Activated CD8-positive, alpha-beta memory T cell treated with anti-CD3 and anti-CD28 coated beads, Interleukin-2, amount 10 ng/mL, durations not matched to agents 7 days and 5 days (primary cell): ENCODE measurements at regions of chr13 and their contacts with region 1.

Region 1: DNA sequence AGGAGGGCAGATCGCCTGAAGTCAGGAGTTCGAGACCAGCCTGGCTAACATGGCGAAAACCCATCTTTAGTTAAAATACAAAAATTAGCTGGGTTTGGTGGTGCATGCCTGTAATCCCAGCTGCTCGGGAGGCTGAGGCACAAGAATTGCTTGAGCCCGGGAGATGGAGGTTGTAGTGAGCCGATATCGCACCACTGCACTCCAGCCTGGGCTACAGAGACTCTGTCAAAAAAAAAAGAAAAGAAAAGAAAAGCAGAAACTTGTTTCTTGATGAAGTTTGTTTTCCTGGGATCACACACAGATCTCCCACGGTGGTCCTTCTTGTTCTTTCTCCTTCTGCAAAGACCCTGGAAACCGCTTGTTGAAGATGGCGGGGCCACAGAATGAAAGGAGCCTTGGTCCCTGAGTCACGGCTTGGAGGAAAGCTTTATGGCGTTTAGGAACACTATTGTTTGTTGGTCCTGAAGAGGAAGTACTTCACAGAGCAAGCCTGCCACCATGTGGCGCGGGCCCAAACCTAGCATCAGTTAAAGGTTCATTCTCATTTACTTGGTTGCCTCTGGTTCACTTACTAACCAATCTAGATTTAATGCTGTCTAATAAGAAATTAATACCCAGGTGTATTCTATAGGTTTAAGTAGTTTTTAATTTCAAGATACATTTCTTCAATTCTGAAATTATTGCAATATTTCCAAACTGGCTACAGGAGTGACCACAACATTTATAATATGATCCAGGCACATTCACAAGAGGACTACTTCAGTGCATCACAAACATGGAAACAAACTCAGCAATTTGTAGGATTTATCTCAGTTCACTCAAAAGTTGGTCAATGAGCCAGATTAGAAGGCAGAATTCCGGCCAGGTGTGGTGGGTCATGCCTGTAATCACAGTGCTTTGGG is 21.3 kb upstream of the ARL11 start:
- DNase-seq: peak; percentile 90
- ATAC-seq: peak; percentile 100
- H3K4me3 Mint-ChIP-seq: peak overlapping the region; percentile 72
- H3K27ac Mint-ChIP-seq: peak overlapping the region; percentile 77
- H3K4me1 Mint-ChIP-seq: peaks cover 4% of the 10 kb centered on the region
- H3K27me3 Mint-ChIP-seq: no peaks in the 10 kb centered on the region

Region 2: DNA sequence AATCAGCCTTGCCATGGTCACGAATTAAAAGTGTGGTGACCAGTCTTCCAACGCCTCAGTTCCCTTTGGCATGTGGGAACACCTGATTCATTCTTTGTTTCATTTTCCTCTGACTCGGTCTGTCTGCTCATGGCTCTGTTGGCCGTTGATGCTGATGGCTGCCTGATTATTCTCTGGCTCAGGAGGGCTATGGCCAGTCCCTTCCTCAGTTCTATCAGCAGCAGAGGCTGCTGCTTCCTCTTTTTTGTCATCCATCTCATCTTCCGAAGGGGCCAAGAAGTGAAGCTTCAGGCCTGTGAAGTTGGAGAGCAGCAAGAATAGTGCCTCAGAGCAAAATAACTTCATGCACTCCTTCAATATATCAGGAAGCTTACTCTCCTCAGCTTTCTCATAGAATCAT is 396.3 kb before region 1 on chr13:
- CTCF ChIA-PET with region 1: no interaction called
- DNase-seq: no peak
- ATAC-seq: no peak
- H3K4me3 Mint-ChIP-seq: no peak overlapping the region
- H3K27ac Mint-ChIP-seq: no peak overlapping the region
- H3K4me1 Mint-ChIP-seq: peaks cover 13% of the 10 kb centered on the region
- H3K27me3 Mint-ChIP-seq: no peaks in the 10 kb centered on the region

Region 3: GRCh38 chr13:49278211-49278610 is 328.8 kb before region 1 on chr13:
- CTCF ChIA-PET with region 1: interaction called, 13 read pairs
- DNase-seq: no peak
- ATAC-seq: no peak
- H3K4me3 Mint-ChIP-seq: no peak overlapping the region
- H3K27ac Mint-ChIP-seq: no peak overlapping the region
- H3K4me1 Mint-ChIP-seq: no peaks in the 10 kb centered on the region
- H3K27me3 Mint-ChIP-seq: no peaks in the 10 kb centered on the region

Region 4: GRCh38 chr13:49300739-49301589 is 306.0 kb before region 1 on chr13:
- CTCF ChIA-PET with region 1: interaction called, 24 read pairs
- DNase-seq: peak; percentile 82
- ATAC-seq: peak; percentile 97
- H3K4me3 Mint-ChIP-seq: peak overlapping the region; percentile 72
- H3K27ac Mint-ChIP-seq: peak overlapping the region; percentile 88
- H3K4me1 Mint-ChIP-seq: peaks cover 4% of the 10 kb centered on the region
- H3K27me3 Mint-ChIP-seq: no peaks in the 10 kb centered on the region

Region 5: GRCh38 chr13:49311816-49312215 is 295.2 kb before region 1 on chr13:
- CTCF ChIA-PET with region 1: interaction called, 11 read pairs
- DNase-seq: no peak
- ATAC-seq: no peak
- H3K4me3 Mint-ChIP-seq: no peak overlapping the region
- H3K27ac Mint-ChIP-seq: no peak overlapping the region
- H3K4me1 Mint-ChIP-seq: peaks cover 12% of the 10 kb centered on the region
- H3K27me3 Mint-ChIP-seq: no peaks in the 10 kb centered on the region

Region 6: DNA sequence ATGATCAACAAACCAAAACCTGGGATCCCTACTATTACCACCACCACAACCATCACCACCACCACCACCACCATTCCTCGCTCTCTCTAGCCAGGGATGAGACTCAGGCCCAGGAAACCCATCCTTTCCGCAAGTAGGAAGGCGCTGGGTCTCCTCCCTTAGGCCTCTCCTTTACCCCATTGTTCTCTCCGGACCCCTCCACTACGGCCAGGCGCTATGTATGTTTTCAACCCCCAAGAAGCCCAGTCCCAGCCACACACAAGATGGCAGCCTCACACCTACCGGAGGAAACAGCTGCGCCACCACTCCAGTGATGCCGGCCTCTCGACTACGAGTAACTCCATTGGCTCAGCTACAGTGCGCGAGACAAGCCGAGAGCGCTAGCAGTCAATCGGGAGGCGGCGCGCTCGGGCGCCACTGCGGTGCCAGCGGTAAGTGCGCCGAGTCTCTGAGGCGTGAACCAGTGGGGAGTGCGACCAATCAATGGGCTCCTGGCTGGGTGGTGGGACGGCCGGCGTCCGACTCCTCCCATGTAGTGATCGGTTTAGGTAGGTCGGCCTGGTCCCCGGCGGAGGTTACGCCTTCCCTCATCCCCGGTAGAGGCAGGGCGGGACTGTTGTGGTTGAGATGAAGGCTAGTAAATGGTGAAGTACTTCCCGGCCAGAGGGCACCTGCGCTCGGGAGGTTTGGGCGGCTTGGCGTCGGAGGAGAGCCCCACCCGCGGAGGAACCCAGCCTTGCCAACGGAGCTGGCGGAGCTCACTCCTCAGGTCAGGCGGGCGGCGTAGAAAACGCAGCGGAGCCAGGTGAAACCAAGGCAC is 163.1 kb before region 1 on chr13 and contains the starts of genes CAB39L and SETDB2:
- CTCF ChIA-PET with region 1: interaction called, 10 read pairs
- DNase-seq: peak; percentile 100
- ATAC-seq: peak; percentile 94
- H3K4me3 Mint-ChIP-seq: peak within 1 kb of the TSS; percentile 97
- H3K27ac Mint-ChIP-seq: peak within 1 kb of the TSS; percentile 98
- H3K4me1 Mint-ChIP-seq: peaks cover 47% of the 10 kb centered on the region
- H3K27me3 Mint-ChIP-seq: no peaks in the 10 kb centered on the region
- total RNA-seq, gene CAB39L: 4.0 to 4.3 TPM
- total RNA-seq, gene SETDB2: 14.3 to 18.0 TPM

Region 7: GRCh38 chr13:49495783-49496762 is 110.9 kb before region 1 on chr13 and contains the start of gene PHF11:
- CTCF ChIA-PET with region 1: interaction called, 10 read pairs
- DNase-seq: peak; percentile 92
- ATAC-seq: peak; percentile 87
- H3K4me3 Mint-ChIP-seq: peak within 1 kb of the TSS; percentile 94
- H3K27ac Mint-ChIP-seq: peak within 1 kb of the TSS; percentile 99
- H3K4me1 Mint-ChIP-seq: peaks cover 53% of the 10 kb centered on the region
- H3K27me3 Mint-ChIP-seq: no peaks in the 10 kb centered on the region
- total RNA-seq, gene PHF11: 79.6 to 129 TPM

Region 8: DNA sequence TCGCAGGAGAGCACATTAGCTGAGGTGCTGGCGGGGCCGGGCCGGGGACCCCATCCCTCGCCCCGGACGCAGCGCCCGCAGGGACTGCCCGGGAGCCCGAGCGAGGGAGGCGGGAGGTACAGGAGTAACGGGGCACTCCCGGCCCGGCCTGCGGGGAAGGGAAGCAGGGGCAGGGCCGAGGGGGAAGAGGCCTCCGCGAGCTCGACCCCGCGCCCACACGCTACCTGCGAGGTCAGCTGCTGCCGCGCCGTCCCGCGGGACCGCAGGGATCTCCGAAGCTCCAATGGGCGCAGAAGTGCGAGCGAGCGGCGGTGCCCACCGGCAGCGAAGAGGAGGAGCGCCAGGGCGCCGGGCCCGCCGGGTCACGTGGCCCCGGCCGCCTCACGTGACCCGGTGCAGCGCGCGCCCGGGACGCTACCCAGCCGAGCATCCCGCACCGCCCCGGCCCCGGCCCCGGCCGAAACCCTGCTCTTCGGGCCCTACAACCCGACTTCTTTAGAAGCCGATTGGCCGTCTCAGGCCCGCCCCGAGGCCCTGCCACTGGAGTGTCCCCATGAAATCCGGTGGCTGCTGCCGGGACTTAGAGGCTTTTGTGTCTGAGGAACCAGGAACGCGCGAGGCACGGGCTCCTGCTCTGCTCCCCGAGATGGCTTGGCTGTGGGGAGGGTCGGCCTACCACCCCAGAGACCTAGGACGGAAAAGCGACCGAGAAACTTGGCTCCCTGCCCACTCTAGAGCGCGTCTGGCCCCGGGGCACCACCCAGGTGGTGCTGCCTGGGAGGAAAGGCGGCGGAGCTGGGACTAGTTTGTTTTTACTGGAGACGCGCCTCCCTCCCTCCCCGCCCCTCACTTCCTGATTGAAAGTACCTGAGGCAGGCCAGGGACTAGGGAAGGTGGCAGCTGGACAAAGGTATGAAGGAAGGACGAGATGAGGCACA is 21.5 kb before region 1 on chr13 and contains the start of gene RCBTB1:
- CTCF ChIA-PET with region 1: interaction called, 14 read pairs
- DNase-seq: peak; percentile 76
- ATAC-seq: peak; percentile 98
- H3K4me3 Mint-ChIP-seq: peak within 1 kb of the TSS; percentile 87
- H3K27ac Mint-ChIP-seq: peak within 1 kb of the TSS; percentile 74
- H3K4me1 Mint-ChIP-seq: peaks cover 26% of the 10 kb centered on the region
- H3K27me3 Mint-ChIP-seq: peaks cover 2% of the 10 kb centered on the region
- total RNA-seq, gene RCBTB1: 18.1 to 20.9 TPM